ENCODE measurements at regions of chr2 and their contacts with region 1.

Region 1: GRCh38 chr2:219689676-219690628 is 62.5 kb downstream of the SLC4A3 start:
- DNase-seq: peak; percentile 58
- H3K27ac ChIP-seq: peak overlapping the region; percentile 90
- CTCF ChIP-seq: peak; percentile 82

Region 2: DNA sequence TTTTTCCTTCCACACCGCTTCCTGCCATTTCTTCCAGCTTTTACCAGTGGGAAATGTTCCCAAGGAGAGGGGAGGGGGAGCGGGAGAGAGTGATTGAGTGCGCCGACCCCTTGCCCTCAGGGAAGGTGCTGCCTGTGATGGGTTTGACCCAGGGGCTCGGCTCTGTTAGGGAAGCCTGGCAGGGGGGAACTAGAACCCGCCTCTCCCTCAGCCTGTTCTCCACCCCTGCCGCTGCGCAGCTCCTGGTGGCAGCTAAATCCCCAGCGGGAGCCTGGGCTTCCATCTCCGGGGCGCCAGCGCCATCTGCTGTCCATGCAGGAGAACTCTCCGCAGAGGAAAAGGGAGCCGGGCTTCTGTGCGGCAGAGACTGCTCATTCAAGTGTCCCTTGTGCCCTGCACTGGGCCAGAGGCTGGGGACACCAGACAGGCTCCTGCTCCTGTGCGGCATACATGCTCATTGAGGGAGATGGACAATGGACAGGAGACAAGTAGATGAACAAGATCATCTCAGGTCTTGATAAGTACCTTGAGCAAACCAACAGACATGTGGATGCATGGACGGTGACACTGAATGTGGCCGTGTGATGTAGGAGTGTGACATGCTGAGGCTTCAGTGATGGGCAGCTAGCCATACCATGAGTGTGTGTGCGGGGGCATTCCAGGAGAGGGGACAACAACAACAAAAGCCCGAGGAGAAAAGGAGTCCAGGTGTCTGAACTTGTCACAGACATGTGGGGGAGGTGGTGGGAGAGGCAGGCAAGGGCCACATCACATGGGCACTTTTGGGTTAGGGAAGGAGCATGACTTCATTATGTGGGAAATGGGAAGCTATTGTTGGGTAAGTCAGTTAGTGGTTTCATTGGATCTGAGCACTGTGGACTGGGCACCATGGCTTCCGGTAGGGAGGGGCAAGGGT is 159.6 kb before region 1 on chr2:
- CTCF ChIA-PET with region 1: no interaction called
- POLR2A ChIA-PET with region 1: no interaction called
- DNase-seq: peak; percentile 85
- H3K27ac ChIP-seq: no peak overlapping the region
- CTCF ChIP-seq: peak; percentile 93

Region 3: DNA sequence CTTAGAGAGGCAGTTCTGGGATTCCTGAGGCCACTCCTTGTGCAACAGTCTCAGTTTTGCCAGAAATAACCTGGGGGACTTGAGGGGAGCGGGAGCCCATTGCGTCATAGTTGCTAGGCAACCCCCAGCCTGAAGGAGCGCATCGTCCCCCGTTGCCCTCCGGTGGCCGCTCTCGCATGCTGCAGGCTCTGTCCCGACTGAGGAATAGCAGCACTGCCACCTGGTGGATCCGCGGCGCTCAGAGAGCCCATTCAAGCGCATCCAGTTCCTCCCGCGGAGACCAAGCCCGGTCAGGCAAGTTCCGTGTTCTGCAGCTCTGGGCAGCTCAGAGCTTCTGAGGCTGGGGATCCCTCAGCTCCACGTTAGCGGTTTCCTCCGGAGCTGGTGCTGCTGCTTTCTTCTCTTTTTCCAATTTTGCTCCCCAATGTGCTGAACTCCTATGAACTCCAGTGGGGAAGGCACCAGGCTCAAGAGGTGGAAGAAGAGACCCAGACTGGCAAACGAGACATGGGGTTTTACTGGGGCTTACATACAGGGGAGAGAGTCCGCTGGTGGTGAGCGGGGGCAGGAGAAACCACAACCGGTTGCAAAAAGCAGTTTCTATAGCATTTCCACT is 47.4 kb before region 1 on chr2:
- CTCF ChIA-PET with region 1: interaction called, 11 read pairs
- POLR2A ChIA-PET with region 1: interaction called, 5 read pairs
- DNase-seq: peak; percentile 95
- H3K27ac ChIP-seq: peak overlapping the region; percentile 38
- CTCF ChIP-seq: peak; percentile 99

Region 4: GRCh38 chr2:219676586-219676985 is 13.4 kb before region 1 on chr2:
- CTCF ChIA-PET with region 1: interaction called, 7 read pairs
- POLR2A ChIA-PET with region 1: interaction called, 10 read pairs
- DNase-seq: no peak
- H3K27ac ChIP-seq: no peak overlapping the region
- CTCF ChIP-seq: no peak